A673 (cell line): ENCODE measurements at regions of chr6 and their contacts with region 1.

Region 1: GRCh38 chr6:119110601-119111548 is 32.4 kb upstream of the FAM184A start:
- DNase-seq: peak; percentile 64
- H3K4me3 ChIP-seq: no peak overlapping the region
- H3K27ac ChIP-seq: no peak overlapping the region
- H3K4me1 ChIP-seq: no peaks in the 10 kb centered on the region
- H3K27me3 ChIP-seq: peaks cover 4% of the 10 kb centered on the region
- CTCF ChIP-seq: peak; percentile 62

Region 2: DNA sequence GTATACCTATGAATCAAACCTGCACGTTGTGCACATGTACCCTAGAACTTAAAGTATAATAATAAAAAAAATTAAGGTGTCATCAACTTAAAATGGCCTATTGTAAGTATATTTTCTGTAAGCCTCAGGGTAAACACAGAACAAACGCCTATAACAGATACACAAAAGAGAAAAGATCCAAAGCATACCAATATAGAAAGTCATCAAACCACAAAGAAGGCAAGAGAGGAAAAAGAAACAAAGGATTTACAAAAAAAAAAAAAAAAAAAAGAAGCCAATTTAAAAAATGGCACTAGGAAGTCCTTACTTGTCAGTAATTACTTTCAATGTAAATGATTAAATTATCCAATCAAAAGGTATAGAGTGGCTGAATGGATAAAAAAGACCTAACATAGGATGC is 241.5 kb before region 1 on chr6:
- CTCF ChIA-PET with region 1: no interaction called
- POLR2A ChIA-PET with region 1: no interaction called
- intact Hi-C with region 1: no loop called
- DNase-seq: no peak
- H3K4me3 ChIP-seq: no peak overlapping the region
- H3K27ac ChIP-seq: no peak overlapping the region
- H3K4me1 ChIP-seq: no peaks in the 10 kb centered on the region
- H3K27me3 ChIP-seq: no peaks in the 10 kb centered on the region
- CTCF ChIP-seq: no peak

Region 3: DNA sequence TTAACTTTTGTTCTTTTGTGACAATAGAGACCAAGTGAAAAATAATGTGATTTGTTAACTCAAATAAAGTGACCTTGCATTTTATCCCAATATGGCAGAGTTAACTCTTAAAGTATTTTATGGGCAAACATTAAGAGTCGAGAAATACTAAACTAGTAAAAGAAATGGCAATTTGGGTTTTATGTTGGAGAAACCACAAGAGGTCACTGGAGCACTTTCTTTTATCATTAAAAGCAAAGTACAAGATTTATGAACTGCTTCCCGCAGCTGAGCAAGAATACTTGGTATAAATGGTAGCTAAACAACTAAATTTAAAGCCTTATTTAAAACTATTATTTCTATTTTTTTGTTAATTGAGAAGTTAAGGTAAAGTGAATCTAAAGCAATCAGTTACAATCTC is 142.5 kb before region 1 on chr6:
- CTCF ChIA-PET with region 1: interaction called, 11 read pairs
- POLR2A ChIA-PET with region 1: no interaction called
- intact Hi-C with region 1: loop called (anchors 1 kb)
- DNase-seq: peak; percentile 33
- H3K4me3 ChIP-seq: no peak overlapping the region
- H3K27ac ChIP-seq: no peak overlapping the region
- H3K4me1 ChIP-seq: no peaks in the 10 kb centered on the region
- H3K27me3 ChIP-seq: no peaks in the 10 kb centered on the region
- CTCF ChIP-seq: peak; percentile 50

Region 4: GRCh38 chr6:119182875-119183274 is 72.0 kb after region 1 on chr6:
- CTCF ChIA-PET with region 1: no interaction called
- POLR2A ChIA-PET with region 1: interaction called, 14 read pairs
- intact Hi-C with region 1: no loop called
- DNase-seq: no peak
- H3K4me3 ChIP-seq: no peak overlapping the region
- H3K27ac ChIP-seq: no peak overlapping the region
- H3K4me1 ChIP-seq: no peaks in the 10 kb centered on the region
- H3K27me3 ChIP-seq: no peaks in the 10 kb centered on the region
- CTCF ChIP-seq: no peak

Region 5: GRCh38 chr6:119259027-119259426 is 148.2 kb after region 1 on chr6:
- CTCF ChIA-PET with region 1: no interaction called
- POLR2A ChIA-PET with region 1: no interaction called
- intact Hi-C with region 1: no loop called
- DNase-seq: no peak
- H3K4me3 ChIP-seq: no peak overlapping the region
- H3K27ac ChIP-seq: no peak overlapping the region
- H3K4me1 ChIP-seq: no peaks in the 10 kb centered on the region
- H3K27me3 ChIP-seq: no peaks in the 10 kb centered on the region
- CTCF ChIP-seq: no peak